Mammary epithelial cell (primary cell): ENCODE measurements at regions of chr10 and their contacts with region 1.

Region 1: DNA sequence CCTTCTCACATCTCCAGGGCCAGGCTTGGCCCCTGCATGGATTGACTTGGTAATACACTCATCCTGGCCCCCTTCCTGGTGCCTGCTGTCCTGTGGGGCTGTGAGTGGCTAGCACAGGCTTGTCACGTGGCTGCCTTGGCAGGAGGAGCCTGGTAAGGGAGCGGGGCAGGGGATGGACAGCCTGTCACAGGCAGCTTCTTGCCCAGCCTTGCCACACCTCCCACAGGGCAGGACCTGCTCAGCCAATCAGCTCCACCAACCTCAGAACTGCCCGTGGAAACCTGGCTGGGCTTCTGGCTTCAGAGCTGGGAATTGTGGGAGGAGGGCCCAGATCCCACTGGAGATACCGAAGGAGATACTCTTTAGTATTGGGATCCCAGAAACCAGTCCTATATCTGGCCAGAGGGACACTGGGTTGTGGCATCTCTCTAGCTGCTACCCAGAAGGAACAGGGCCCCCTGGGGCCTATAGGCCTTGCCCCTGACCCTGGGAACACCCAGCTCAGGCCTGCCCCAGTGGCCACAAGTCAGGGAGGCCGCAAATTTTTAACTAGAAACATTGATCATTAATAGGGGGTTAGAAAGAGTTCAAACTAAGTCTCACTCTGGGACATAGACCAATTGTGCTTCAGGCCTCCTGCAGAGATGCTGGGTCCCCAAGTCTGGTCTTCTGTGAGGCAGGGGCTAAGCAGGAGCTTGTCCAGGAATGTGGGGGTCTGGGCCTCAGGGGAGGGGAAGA is at the start of gene HOGA1:
- DNase-seq: peak; percentile 59
- H3K4me3 ChIP-seq: no peak within 1 kb of the TSS
- H3K27ac ChIP-seq: no peak within 1 kb of the TSS
- H3K4me1 ChIP-seq: peaks cover 7% of the 10 kb centered on the region
- H3K27me3 ChIP-seq: no peaks in the 10 kb centered on the region
- CTCF ChIP-seq: no peak
- total RNA-seq, gene HOGA1: 0.17 to 1.8 TPM

Region 2: GRCh38 chr10:97623277-97623676 is 39.0 kb after region 1 on chr10:
- CTCF ChIA-PET with region 1: no interaction called
- dilution Hi-C with region 1: loop called (anchors 5 kb)
- in situ Hi-C with region 1: no loop called
- intact Hi-C with region 1: no loop called
- DNase-seq: no peak
- H3K4me3 ChIP-seq: no peak overlapping the region
- H3K27ac ChIP-seq: no peak overlapping the region
- H3K4me1 ChIP-seq: no peaks in the 10 kb centered on the region
- H3K27me3 ChIP-seq: no peaks in the 10 kb centered on the region
- CTCF ChIP-seq: no peak